CD14-positive monocyte (primary cell): ENCODE measurements at regions of chr2 and their contacts with region 1.

Region 1: DNA sequence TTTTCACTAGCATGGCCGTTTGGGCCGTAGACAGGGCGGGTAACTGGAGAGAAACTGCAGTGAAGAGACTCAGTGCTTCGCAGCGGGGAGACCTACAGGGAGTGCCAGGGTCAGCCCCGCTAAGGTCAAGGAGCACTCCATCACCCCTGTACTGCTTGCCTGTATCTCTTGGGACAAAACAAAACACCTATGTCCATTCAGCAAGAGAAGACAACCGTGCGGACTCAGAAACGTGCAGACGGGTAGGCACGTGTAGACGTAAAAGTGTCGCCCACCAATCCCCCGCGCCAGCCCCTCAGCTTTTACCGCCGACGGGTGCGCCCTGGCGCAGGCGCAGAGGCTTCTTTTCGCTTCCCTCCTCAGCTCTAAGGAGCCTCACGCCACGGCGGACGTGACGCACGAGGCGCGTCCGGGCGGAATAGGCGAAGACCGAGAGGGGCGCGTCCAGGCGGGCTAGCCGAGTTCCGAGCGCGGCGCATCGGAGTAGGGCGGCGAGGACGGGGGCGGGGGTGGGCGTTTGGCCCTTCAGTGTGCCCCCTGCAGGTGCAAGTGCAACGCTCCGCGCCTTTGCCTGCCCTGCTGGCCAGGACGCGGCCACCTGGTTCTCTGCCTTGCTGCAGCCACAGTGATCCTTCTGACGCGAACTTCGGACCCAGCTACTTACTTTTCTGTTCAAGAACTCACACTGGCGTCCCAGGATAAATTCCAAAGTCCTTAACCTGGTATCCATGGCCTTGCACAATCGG is 3.3 kb upstream of the SOS1 start:
- DNase-seq: peak; percentile 87 to 89 (median 89)
- H3K4me3 ChIP-seq: peak overlapping the region; percentile 87 to 99 (median 98)
- H3K4me3 Mint-ChIP-seq: peak overlapping the region; percentile 78 to 96
- H3K27ac ChIP-seq: peak overlapping the region; percentile 75 to 89
- H3K27ac Mint-ChIP-seq: peak overlapping the region; percentile 88 to 97 (median 92)
- H3K4me1 ChIP-seq: peaks cover 45 to 61% of the 10 kb centered on the region in 2 donors
- H3K4me1 Mint-ChIP-seq: peaks cover 53% of the 10 kb centered on the region
- H3K27me3 ChIP-seq: no peaks in the 10 kb centered on the region
- H3K27me3 Mint-ChIP-seq: no peaks in the 10 kb centered on the region
- CTCF ChIP-seq: no peak

Region 2: GRCh38 chr2:38912619-38913018 is 211.6 kb before region 1 on chr2:
- intact Hi-C with region 1: no loop called
- DNase-seq: no peak
- H3K4me3 ChIP-seq: no peak overlapping the region
- H3K4me3 Mint-ChIP-seq: no peak overlapping the region
- H3K27ac ChIP-seq: no peak overlapping the region
- H3K27ac Mint-ChIP-seq: no peak overlapping the region
- H3K4me1 ChIP-seq: peaks cover 0 to 2% of the 10 kb centered on the region in 2 donors
- H3K4me1 Mint-ChIP-seq: peaks cover 6% of the 10 kb centered on the region
- H3K27me3 ChIP-seq: no peaks in the 10 kb centered on the region
- H3K27me3 Mint-ChIP-seq: peaks cover 0 to 4% (median 1%) of the 10 kb centered on the region in 3 donors
- CTCF ChIP-seq: no peak

Region 3: GRCh38 chr2:39069136-39069515 is 55.0 kb before region 1 on chr2:
- intact Hi-C with region 1: loop called in 1 of 2 experiments (anchors 10 kb)
- DNase-seq: no peak
- H3K4me3 ChIP-seq: no peak overlapping the region
- H3K4me3 Mint-ChIP-seq: no peak overlapping the region
- H3K27ac ChIP-seq: no peak overlapping the region
- H3K27ac Mint-ChIP-seq: no peak overlapping the region
- H3K4me1 ChIP-seq: no peaks in the 10 kb centered on the region
- H3K4me1 Mint-ChIP-seq: no peaks in the 10 kb centered on the region
- H3K27me3 ChIP-seq: no peaks in the 10 kb centered on the region
- H3K27me3 Mint-ChIP-seq: peaks cover 0 to 2% (median 0%) of the 10 kb centered on the region in 3 donors
- CTCF ChIP-seq: no peak

Region 4: GRCh38 chr2:39099870-39100728 is 24.1 kb before region 1 on chr2:
- intact Hi-C with region 1: no loop called
- DNase-seq: no peak
- H3K4me3 ChIP-seq: no peak overlapping the region
- H3K4me3 Mint-ChIP-seq: no peak overlapping the region
- H3K27ac ChIP-seq: peak overlapping the region in 1 of 2 donors; percentile 7
- H3K27ac Mint-ChIP-seq: peak overlapping the region in 3 of 7 donors; percentile 6 to 62 (median 58)
- H3K4me1 ChIP-seq: peaks cover 7 to 26% of the 10 kb centered on the region in 2 donors
- H3K4me1 Mint-ChIP-seq: peaks cover 41% of the 10 kb centered on the region
- H3K27me3 ChIP-seq: no peaks in the 10 kb centered on the region
- H3K27me3 Mint-ChIP-seq: peaks cover 0 to 2% (median 0%) of the 10 kb centered on the region in 3 donors
- CTCF ChIP-seq: no peak

Region 5: GRCh38 chr2:39227628-39228412 is 103.6 kb after region 1 on chr2:
- intact Hi-C with region 1: loop called in 1 of 2 experiments (anchors 2 kb)
- DNase-seq: peak; percentile 53 to 66 (median 62)
- H3K4me3 ChIP-seq: peak overlapping the region in 2 of 3 experiments; percentile 21 to 62
- H3K4me3 Mint-ChIP-seq: peak overlapping the region; percentile 74 to 90
- H3K27ac ChIP-seq: no peak overlapping the region
- H3K27ac Mint-ChIP-seq: no peak overlapping the region
- H3K4me1 ChIP-seq: peaks cover 5 to 10% of the 10 kb centered on the region in 2 donors
- H3K4me1 Mint-ChIP-seq: peaks cover 11% of the 10 kb centered on the region
- H3K27me3 ChIP-seq: no peaks in the 10 kb centered on the region
- H3K27me3 Mint-ChIP-seq: peaks cover 0 to 2% (median 0%) of the 10 kb centered on the region in 3 donors
- CTCF ChIP-seq: peak; percentile 90

Region 6: DNA sequence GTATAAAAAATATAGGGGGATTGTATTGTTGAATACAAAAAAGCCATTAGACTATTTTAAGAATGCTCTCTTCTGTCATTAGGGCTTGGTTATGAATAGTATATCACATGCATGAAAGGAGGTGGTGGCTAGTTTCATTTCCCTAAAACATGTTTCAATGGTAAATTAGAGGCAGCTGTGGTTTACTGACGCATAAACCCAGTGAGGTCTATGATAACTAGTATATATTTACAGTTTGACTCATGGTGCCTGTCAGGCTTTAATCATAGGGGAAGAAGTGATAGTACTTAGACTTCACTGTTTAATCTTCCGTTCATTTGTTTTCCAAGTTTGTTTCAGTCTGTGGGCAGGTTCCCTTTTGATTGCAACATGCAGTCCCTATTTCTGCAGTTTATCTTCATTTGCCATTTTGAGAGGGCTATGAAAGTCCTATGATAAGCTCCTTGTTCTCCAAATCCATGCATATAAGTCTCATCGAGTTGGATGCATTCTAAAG is 368.0 kb after region 1 on chr2:
- intact Hi-C with region 1: loop called in 1 of 2 experiments (anchors 10 kb)
- DNase-seq: peak; percentile 93 to 99 (median 97)
- H3K4me3 ChIP-seq: peak overlapping the region in 2 of 3 experiments; percentile 31 to 58
- H3K4me3 Mint-ChIP-seq: peak overlapping the region; percentile 41 to 74
- H3K27ac ChIP-seq: peak overlapping the region; percentile 0 to 94
- H3K27ac Mint-ChIP-seq: peak overlapping the region; percentile 96 to 100 (median 98)
- H3K4me1 ChIP-seq: peaks cover 25 to 52% of the 10 kb centered on the region in 2 donors
- H3K4me1 Mint-ChIP-seq: peaks cover 48% of the 10 kb centered on the region
- H3K27me3 ChIP-seq: no peaks in the 10 kb centered on the region
- H3K27me3 Mint-ChIP-seq: peaks cover 5 to 6% (median 6%) of the 10 kb centered on the region in 3 donors
- CTCF ChIP-seq: no peak